PC-3 (cell line): ENCODE measurements at regions of chr7 and their contacts with region 1.

Region 1: GRCh38 chr7:140192620-140193019 is 15.8 kb upstream of the KDM7A start:
- DNase-seq: no peak
- ATAC-seq: no peak
- H3K4me3 ChIP-seq: no peak overlapping the region
- H3K27ac ChIP-seq: no peak overlapping the region
- H3K4me1 ChIP-seq: no peaks in the 10 kb centered on the region
- H3K27me3 ChIP-seq: no peaks in the 10 kb centered on the region
- CTCF ChIP-seq: no peak

Region 2: DNA sequence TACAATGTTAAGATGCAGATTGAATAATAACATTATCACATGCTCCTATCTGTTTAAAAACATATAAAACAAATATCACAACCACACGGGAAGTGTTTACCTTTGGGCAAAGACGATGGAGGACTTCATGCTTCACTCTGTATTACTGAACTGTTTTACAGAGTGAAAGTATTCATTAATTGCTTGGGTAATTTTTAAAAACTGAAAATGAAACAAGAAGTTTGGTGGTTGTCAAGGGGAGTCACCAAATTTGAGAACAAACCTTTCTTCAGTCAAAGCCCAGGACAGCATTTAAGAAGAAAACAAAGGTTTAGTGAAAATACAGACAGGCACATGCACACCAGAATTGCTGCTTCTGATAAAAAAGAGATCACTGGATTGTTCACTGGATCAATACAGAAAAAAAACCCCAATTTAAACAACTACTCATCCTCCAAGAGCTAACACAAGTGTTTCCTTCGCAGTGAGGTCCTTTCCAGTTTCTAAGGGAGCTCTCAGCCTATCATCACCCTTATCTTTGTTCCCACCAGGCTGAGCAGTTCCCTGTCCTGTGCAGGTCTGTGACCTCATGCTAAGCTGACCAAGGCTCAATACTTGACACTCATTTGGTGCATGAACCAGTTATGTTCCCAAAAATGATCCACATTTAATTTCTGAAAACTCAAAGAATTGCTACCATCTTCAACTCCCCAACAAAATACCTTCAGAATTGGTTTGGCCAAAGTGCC is 138.6 kb before region 1 on chr7:
- CTCF ChIA-PET with region 1: no interaction called
- POLR2A ChIA-PET with region 1: no interaction called
- intact Hi-C with region 1: no loop called
- DNase-seq: no peak
- ATAC-seq: no peak
- H3K4me3 ChIP-seq: no peak overlapping the region
- H3K27ac ChIP-seq: no peak overlapping the region
- H3K4me1 ChIP-seq: peaks cover 15% of the 10 kb centered on the region
- H3K27me3 ChIP-seq: no peaks in the 10 kb centered on the region
- CTCF ChIP-seq: no peak

Region 3: DNA sequence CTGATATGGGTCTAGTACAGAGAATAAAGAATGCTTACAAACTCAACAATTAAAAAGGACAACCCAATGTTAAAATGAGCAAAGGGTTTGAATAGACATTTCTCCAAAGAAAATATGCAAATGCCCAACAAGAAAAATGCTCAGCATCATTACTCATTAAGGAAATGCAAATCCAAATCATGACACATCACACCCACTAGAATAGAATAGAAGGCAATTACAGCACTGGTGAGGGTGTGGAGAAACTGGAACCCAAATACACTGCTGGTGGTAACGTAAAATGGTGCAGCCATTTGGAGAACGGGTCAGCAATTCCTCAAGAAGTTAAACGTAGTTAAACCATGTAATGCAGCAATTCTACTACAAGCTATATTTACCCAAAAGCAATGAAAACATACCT is 69.7 kb before region 1 on chr7:
- CTCF ChIA-PET with region 1: no interaction called
- POLR2A ChIA-PET with region 1: no interaction called
- intact Hi-C with region 1: no loop called
- DNase-seq: no peak
- ATAC-seq: no peak
- H3K4me3 ChIP-seq: no peak overlapping the region
- H3K27ac ChIP-seq: no peak overlapping the region
- H3K4me1 ChIP-seq: no peaks in the 10 kb centered on the region
- H3K27me3 ChIP-seq: no peaks in the 10 kb centered on the region
- CTCF ChIP-seq: no peak

Region 4: DNA sequence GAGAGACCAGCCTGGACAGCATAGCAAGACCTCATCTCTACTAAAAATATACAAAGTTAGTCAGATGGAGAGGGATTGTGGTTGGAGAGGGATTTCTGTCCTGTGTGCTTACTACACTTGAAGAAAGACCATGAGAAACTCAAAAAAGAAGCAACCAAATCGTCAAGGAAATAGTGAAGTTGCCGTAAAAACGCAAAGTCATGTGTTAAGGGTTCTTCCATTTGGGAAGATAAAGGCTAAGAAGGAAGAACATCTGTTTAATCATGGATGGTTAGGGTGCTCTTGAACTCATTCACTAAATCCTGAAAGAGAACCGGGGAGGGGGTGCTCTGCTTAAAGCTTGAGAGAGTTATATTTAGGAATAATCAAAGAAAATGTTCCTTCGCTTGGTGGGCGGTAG is 44.0 kb after region 1 on chr7:
- CTCF ChIA-PET with region 1: no interaction called
- POLR2A ChIA-PET with region 1: no interaction called
- intact Hi-C with region 1: no loop called
- DNase-seq: no peak
- ATAC-seq: no peak
- H3K4me3 ChIP-seq: no peak overlapping the region
- H3K27ac ChIP-seq: no peak overlapping the region
- H3K4me1 ChIP-seq: peaks cover 6% of the 10 kb centered on the region
- H3K27me3 ChIP-seq: no peaks in the 10 kb centered on the region
- CTCF ChIP-seq: no peak

Region 5: DNA sequence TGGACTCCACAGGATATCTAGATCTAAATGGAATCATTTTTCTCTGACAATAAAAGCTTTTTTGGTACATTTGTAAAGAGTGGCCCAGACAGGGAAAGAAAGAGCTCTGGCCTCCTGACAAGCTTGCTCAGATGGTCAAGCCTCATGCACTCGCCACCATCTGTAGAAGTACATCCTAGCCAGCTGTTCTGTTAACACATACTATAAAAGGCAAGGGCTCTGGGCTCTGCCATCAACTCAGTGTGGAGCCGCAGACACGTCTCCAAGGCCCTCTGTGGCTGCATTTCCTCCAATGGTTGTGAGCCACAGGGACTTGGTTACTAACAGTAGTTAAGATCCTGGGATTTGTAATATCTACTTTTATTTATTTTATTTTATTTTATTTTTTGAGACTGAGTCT is 54.9 kb after region 1 on chr7:
- CTCF ChIA-PET with region 1: interaction called, 13 read pairs
- POLR2A ChIA-PET with region 1: no interaction called
- intact Hi-C with region 1: no loop called
- DNase-seq: no peak
- ATAC-seq: no peak
- H3K4me3 ChIP-seq: no peak overlapping the region
- H3K27ac ChIP-seq: no peak overlapping the region
- H3K4me1 ChIP-seq: no peaks in the 10 kb centered on the region
- H3K27me3 ChIP-seq: no peaks in the 10 kb centered on the region
- CTCF ChIP-seq: no peak